ENCODE measurements at regions of chr10 and their contacts with region 1.

Region 1: GRCh38 chr10:72048450-72049124 is 39.8 kb downstream of the SPOCK2 start:
- DNase-seq: peak; percentile 87
- CTCF ChIP-seq: peak; percentile 100

Region 2: GRCh38 chr10:70672165-70673042 is 1376.2 kb before region 1 on chr10 and contains the start of gene ADAMTS14:
- CTCF ChIA-PET with region 1: no interaction called
- POLR2A ChIA-PET with region 1: no interaction called
- DNase-seq: no peak
- CTCF ChIP-seq: no peak

Region 3: DNA sequence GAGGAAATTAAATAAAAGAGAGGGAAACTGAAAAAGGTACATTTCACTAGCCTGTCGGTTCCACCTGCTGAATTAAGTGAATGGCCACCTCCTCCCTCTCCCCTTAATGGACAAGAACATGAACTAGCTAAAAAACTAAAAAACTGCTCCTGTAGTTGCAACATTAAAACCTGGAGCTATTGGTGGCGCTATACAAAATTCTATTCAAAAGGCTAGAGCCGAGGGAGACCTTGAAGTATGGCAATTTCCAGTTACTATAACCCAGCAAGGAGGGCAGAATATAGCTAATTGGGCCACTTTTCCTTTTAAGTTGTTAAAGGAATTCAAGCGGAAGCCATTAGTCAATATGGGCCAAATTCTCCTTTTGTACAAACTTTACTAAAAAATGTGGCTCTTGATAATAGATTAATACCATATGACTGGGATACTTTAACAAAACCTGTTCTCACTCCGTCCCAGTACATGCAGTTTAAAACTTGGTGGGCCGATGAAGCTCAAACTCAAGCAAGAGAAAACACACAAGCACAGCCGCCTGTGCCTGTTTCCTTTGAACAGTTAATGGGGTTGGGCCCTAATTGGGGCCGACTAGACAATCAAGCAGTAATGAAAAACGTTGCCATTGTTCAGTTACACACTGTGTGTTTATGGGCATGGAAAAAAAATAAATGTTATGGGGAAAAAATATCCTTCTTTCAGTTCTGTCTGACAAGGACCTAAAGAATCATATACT is 90.9 kb before region 1 on chr10:
- CTCF ChIA-PET with region 1: interaction called, 18 read pairs
- POLR2A ChIA-PET with region 1: no interaction called
- DNase-seq: no peak
- CTCF ChIP-seq: no peak

Region 4: GRCh38 chr10:72013202-72013945 is 35.2 kb before region 1 on chr10:
- CTCF ChIA-PET with region 1: interaction called, 10 read pairs
- POLR2A ChIA-PET with region 1: no interaction called
- DNase-seq: no peak
- CTCF ChIP-seq: no peak

Region 5: DNA sequence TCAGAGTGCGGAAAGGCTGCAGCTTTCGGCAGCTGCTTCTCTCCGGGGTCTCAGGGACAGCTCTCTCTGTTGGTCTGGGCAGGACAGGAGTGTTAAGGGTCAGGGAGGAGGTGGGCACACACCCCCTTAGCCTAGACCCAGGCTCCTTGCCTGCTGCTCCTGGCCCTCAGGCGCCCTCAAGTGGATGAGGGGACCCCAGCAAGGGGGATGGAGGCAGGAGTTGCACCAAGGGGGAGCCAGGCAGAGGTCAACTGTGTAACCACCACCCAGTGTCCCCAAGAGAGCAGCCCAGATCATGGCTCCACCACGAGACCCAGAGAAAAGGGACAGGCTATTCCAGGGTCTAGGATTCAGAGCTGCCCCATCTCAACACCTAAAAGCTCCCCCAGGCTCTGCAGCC is 12.9 kb after region 1 on chr10:
- CTCF ChIA-PET with region 1: interaction called, 45 read pairs
- POLR2A ChIA-PET with region 1: no interaction called
- DNase-seq: peak; percentile 63
- CTCF ChIP-seq: peak; percentile 45

Region 6: DNA sequence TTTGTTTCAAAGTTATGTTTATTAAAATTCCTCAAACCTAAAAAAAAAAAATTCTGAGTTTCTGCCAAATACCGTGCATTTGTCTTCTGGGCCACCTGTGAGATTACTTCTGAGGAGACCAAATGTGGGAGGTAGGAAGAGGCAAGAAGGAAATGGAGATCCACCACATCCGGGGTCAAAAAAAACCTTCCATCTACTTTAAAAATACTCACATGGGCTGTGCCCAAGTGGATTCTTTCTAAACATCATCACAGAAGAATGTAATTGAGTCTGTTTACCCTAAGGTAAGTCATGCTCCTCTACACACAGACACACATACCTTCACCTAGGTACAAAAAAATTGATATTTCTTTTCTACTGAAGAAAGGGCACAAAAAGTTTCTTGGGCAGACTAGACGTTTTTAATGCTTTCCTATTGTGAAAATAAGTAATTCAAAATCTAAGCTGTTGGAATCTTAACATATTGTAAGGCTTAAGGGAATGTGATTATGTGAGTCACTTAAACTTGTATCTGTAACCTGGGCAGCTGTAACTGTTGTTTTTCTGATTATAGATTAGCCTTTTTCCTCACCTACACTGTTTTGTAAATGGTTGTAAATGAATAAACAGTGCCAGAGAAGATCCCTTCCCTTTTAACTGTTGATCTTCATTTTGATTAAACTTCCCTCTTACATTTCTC is 58.9 kb after region 1 on chr10:
- CTCF ChIA-PET with region 1: interaction called, 11 read pairs
- POLR2A ChIA-PET with region 1: no interaction called
- DNase-seq: peak; percentile 36
- CTCF ChIP-seq: no peak

Region 7: DNA sequence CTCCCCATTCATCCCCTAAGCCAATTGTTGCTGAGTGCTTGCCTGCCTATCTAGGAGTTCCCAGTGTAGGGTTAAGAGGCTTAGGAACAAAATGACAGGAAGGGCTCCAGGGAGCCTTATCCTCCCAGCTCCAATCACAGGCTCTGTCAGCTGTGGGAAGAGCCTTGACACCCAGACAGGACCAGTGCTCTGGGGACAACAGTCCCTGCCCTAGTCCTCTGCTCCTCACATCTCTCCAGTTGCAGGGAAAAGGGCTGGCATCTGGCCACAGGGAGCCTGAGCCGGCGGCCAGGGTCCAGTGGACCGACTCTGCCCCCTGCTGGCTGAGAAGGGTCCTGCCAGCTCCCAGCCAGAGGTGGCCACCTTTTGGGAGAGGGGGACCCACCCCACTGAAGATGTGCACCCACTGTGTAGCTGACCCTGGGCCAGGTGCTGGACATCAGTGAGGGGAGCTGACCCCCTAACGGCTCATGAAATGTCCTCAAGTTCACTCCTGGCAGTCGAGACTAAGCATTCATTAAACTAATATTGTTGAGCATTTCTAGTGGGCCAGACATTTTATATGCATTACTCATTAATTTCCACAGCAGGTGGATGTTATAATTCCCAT is 288.5 kb after region 1 on chr10:
- CTCF ChIA-PET with region 1: interaction called, 38 read pairs
- POLR2A ChIA-PET with region 1: no interaction called
- DNase-seq: peak; percentile 68
- CTCF ChIP-seq: peak; percentile 96